Heart left ventricle (tissue), 16 donors: ENCODE measurements at regions of chr2 and their contacts with region 1.

Region 1: GRCh38 chr2:181466661-181467576 is 9.7 kb downstream of the ITGA4 start:
- DNase-seq: peak; percentile 35 to 77 (median 52)
- ATAC-seq: no peak
- H3K4me3 ChIP-seq: no peak overlapping the region
- H3K27ac ChIP-seq: no peak overlapping the region
- H3K4me1 ChIP-seq: peaks cover 0 to 56% (median 0%) of the 10 kb centered on the region in 12 donors
- H3K27me3 ChIP-seq: no peaks in the 10 kb centered on the region
- CTCF ChIP-seq: peak; percentile 58 to 87 (median 72)
- POLR2A ChIP-seq: no peak

Region 2: DNA sequence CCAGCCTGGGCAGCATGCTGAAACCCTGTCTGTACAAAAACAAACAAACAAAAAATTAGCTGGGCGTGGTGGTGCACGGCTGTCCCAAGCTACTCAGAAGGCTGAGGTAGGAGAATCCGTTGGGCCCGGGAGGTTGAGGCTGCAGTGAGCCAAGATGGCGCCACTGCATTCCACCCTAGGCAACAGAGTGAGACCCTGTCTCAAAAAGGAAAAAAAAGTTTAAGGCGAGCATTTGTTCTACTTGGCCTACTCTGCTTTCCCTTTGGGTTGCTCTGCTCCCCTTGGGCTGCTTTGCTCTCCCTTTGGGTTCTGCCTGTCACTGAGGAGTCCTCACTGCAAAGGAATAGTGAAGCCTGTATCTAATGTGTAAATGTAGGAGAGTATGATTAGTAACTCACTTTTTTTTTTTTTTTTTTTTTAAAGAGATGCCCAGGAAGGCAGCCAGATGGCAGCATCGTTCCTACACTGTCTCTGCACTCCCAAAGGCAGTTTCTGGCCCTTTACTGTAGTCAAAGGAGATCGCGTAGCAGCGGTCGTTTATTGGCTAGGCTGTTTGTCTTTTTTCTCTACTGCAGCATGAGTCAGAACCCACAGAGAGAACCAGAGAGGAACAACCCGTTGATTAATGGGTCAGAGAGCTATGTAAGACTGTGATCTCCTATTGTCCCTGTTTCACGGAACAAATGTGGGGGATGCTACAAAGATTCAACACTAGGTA is 1341.5 kb before region 1 on chr2:
- intact Hi-C with region 1: loop called in 7 of 10 experiments (anchors 5 to 10 kb)
- DNase-seq: peak; percentile 16 to 64 (median 54)
- ATAC-seq: peak; percentile 73 to 98 (median 94)
- H3K4me3 ChIP-seq: no peak overlapping the region
- H3K27ac ChIP-seq: no peak overlapping the region
- H3K4me1 ChIP-seq: peaks cover 0 to 3% (median 0%) of the 10 kb centered on the region in 12 donors
- H3K27me3 ChIP-seq: peaks cover 0 to 9% (median 0%) of the 10 kb centered on the region in 9 donors
- CTCF ChIP-seq: peak; percentile 22 to 64 (median 51)
- POLR2A ChIP-seq: no peak

Region 3: GRCh38 chr2:181077128-181077709 is 389.7 kb before region 1 on chr2:
- intact Hi-C with region 1: loop called in 3 of 10 experiments (anchors 5 to 10 kb)
- DNase-seq: no peak
- ATAC-seq: peak in 3 of 4 donors; percentile 53 to 68 (median 65)
- H3K4me3 ChIP-seq: no peak overlapping the region
- H3K27ac ChIP-seq: no peak overlapping the region
- H3K4me1 ChIP-seq: peaks cover 0 to 18% (median 9%) of the 10 kb centered on the region in 12 donors
- H3K27me3 ChIP-seq: no peaks in the 10 kb centered on the region
- CTCF ChIP-seq: peak; percentile 55 to 84 (median 72)
- POLR2A ChIP-seq: no peak

Region 4: GRCh38 chr2:181104512-181105115 is 362.3 kb before region 1 on chr2:
- intact Hi-C with region 1: loop called in 5 of 10 experiments (anchors 5 to 10 kb)
- DNase-seq: no peak
- ATAC-seq: peak in 1 of 4 donors; percentile 46
- H3K4me3 ChIP-seq: no peak overlapping the region
- H3K27ac ChIP-seq: no peak overlapping the region
- H3K4me1 ChIP-seq: peaks cover 0 to 16% (median 0%) of the 10 kb centered on the region in 12 donors
- H3K27me3 ChIP-seq: no peaks in the 10 kb centered on the region
- CTCF ChIP-seq: peak; percentile 44 to 73 (median 61)
- POLR2A ChIP-seq: no peak

Region 5: DNA sequence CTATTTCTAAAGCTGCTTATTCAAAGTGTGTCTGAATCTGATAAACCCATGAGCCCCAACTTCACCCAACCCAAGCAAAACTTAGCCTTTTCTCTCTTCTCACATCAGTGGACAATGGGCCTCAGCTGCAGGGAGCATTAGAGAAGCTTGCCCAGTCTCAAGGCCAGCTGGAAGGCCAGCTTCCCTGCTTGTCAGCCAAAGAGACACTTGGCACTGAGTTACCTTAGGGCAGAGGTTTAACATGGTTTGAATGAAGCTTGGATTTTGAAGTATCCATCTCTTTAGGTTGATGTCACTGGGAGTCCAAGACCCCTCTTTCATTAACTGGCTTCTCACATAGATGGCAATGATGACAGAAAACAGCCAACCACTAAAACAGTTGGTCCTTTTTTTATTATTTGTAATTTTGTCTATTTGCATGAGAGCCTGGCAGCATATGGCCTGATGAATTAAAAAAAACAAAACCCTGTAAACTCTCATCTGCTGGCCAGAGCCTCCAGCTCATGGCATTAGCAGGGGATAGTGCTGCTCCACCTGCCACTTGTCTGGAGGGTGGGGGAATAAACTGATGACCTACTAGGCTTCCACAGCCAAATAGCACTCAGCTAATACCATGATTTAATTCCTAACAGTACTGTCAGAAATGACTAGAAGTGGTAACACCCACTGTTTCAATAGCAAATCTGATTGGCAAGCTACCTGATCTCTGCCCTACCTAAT is 349.6 kb before region 1 on chr2:
- intact Hi-C with region 1: loop called in 1 of 10 experiments (anchors 5 kb)
- DNase-seq: no peak
- ATAC-seq: no peak
- H3K4me3 ChIP-seq: no peak overlapping the region
- H3K27ac ChIP-seq: no peak overlapping the region
- H3K4me1 ChIP-seq: no peaks in the 10 kb centered on the region
- H3K27me3 ChIP-seq: no peaks in the 10 kb centered on the region
- CTCF ChIP-seq: no peak
- POLR2A ChIP-seq: no peak

Region 6: DNA sequence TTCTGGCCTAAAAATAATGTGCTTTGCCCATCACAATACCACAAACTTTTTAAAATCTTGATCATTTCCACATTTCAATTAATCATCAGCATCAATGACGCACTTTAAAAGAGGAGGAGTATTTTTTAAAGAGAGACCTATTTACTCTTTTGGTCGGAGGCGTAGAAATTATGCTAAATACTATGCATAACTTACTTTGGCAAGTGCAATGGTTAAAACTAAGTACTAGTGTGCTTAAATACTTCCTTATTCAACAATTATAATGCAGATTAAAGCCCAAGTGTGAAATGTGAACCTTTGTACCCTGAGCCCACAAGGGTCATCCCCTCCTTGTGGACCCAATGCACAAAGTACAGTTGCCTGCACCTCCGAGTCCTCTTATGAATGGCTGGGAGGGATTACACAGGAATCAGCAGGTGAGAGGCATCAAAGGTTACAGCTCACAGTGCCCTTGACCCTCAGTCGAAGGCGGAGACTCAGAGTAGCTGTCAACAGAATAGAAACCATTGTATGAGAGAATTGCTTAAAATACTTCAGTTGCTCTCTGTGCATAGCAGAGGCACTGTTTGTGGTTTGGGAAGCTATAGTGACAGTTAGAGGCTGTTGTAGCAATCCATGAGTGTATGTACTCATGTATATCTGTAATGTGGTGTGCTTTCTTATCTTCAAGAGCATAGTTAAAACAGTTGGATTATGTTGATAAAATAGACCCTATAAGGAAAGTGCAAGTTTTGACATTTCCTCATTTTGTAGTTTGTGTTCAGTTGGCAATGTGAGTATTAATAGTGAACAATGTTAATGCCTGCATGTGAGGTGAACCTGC is 161.4 kb before region 1 on chr2:
- intact Hi-C with region 1: loop called in 1 of 10 experiments (anchors 10 kb)
- DNase-seq: peak in 4 of 5 donors; percentile 26 to 62 (median 35)
- ATAC-seq: peak; percentile 94 to 98 (median 98)
- H3K4me3 ChIP-seq: no peak overlapping the region
- H3K27ac ChIP-seq: peak overlapping the region in 8 of 12 donors; percentile 8 to 88 (median 44)
- H3K4me1 ChIP-seq: peaks cover 0 to 65% (median 7%) of the 10 kb centered on the region in 12 donors
- H3K27me3 ChIP-seq: no peaks in the 10 kb centered on the region
- CTCF ChIP-seq: no peak
- POLR2A ChIP-seq: no peak

Region 7: GRCh38 chr2:181407171-181407570 is 59.7 kb before region 1 on chr2:
- intact Hi-C with region 1: no loop called
- DNase-seq: no peak
- ATAC-seq: peak in 3 of 4 donors; percentile 39 to 60 (median 53)
- H3K4me3 ChIP-seq: no peak overlapping the region
- H3K27ac ChIP-seq: peak overlapping the region in 1 of 12 donors; percentile 35
- H3K4me1 ChIP-seq: peaks cover 0 to 17% (median 0%) of the 10 kb centered on the region in 12 donors
- H3K27me3 ChIP-seq: no peaks in the 10 kb centered on the region
- CTCF ChIP-seq: no peak
- POLR2A ChIP-seq: no peak